Kidney (tissue), 22 donors: ENCODE measurements at regions of chr2 and their contacts with region 1.

Region 1: GRCh38 chr2:42077343-42077742 is 29.5 kb downstream of the PKDCC start:
- DNase-seq: no peak
- H3K4me3 ChIP-seq: no peak overlapping the region
- H3K27ac ChIP-seq: no peak overlapping the region
- H3K4me1 ChIP-seq: peaks cover 0 to 9% (median 6%) of the 10 kb centered on the region in 3 donors
- H3K27me3 ChIP-seq: no peaks in the 10 kb centered on the region
- CTCF ChIP-seq: no peak

Region 2: DNA sequence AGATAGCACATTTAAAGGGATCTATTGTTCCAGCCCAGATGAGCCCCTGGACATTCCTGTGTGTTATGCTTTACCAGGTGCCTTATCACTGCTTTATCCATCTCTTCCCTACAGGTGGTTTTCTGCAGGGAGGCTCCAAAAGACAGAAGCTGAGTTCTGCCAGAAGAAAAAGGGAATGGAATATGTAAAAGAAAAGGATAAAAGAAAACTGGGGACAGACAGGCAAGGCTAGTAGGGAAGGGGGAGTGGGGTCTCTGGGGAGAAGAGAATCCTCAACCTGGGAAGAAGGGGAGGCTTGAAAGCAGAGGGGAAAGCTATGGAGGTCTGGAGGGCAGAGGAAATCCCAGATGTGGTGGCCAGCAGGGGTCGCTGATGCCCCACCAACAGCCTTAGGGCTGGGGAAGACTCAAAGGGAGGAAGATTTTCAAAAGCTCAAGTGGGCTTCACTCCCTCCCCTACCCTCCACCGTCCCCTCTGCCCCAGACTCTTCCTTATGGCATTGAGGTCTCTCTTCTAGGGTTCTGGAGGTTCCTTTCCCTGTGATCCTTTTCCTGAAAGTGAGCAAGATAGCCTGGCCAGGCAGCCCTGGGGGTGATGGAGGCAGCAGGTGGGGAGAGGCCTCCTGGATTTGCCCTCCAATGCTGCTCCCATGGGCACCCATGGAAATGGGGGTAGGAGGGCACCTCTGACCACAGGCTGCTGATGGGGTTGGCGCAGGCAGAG is 207.6 kb before region 1 on chr2:
- intact Hi-C with region 1: loop called (anchors 5 kb)
- DNase-seq: peak; percentile 85 to 91 (median 89)
- H3K4me3 ChIP-seq: no peak overlapping the region
- H3K27ac ChIP-seq: no peak overlapping the region
- H3K4me1 ChIP-seq: peaks cover 0 to 12% (median 6%) of the 10 kb centered on the region in 3 donors
- H3K27me3 ChIP-seq: no peaks in the 10 kb centered on the region
- CTCF ChIP-seq: peak; percentile 94